Heart left ventricle (tissue), 16 donors: ENCODE measurements at regions of chr17 and their contacts with region 1.

Region 1: DNA sequence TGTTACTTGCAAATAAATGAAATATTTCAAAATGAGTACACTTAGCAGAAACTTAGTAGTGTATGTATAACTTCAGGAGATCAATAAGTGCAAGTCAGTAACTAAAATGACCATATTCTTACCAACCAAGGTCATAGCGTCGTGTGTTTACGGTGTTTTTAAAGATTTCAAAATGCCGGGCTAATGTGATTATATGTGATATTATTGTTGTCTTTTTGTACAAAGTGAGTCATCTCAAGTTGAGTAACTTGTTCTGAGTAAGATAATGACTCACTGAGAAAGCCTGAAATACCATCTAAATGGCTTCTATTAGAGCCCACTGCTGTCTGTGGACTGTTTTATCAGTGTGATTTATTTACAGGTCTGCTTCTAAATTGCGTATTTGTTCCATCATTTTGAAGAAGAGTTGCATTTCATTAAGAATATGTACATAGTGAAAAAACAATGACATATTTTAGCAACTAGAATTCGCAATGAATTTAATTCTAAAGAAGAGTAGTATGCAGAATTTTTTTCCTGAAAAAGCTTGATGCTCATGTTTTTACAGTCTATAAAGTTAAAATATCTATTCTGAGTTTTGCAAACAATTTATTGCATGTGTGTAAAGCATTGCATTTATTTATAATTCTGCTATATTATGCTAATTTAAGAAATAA is 12.7 kb downstream of the KRT12 start:
- DNase-seq: no peak
- ATAC-seq: no peak
- H3K4me3 ChIP-seq: no peak overlapping the region
- H3K27ac ChIP-seq: no peak overlapping the region
- H3K4me1 ChIP-seq: peaks cover 0 to 11% (median 2%) of the 10 kb centered on the region in 12 donors
- H3K27me3 ChIP-seq: peaks cover 0 to 10% (median 0%) of the 10 kb centered on the region in 9 donors
- CTCF ChIP-seq: no peak
- POLR2A ChIP-seq: no peak

Region 2: DNA sequence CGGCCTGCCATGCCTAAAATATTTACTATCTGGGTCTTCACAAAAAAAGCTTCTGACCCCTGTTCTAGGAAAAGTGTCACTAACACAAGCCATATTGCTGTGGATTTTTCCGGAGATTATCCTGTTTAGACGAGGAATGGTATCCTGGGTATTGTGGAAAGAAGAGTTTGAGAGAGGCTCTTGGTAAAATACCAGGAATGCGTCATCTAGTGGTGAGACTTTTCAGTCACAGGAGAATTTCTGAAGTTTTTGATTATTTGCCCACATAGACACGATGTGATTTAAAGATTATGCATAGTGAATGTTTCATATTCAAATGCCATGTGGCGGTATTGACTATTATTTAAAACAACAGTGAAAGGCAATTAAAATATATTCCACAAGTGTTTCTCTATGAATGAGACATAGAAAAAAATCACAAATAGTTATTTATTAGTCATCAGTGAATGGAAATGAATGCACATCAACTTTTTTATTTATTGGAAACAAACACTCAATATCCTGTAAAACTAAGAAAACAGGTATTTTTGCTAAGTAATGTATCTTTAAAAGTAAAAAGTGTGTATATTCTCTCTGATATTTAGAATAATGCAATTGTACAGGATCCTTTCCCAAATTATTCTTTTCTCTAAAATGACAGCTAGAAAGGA is 62.4 kb before region 1 on chr17:
- intact Hi-C with region 1: no loop called
- DNase-seq: no peak
- ATAC-seq: no peak
- H3K4me3 ChIP-seq: no peak overlapping the region
- H3K27ac ChIP-seq: no peak overlapping the region
- H3K4me1 ChIP-seq: peaks cover 0 to 10% (median 0%) of the 10 kb centered on the region in 12 donors
- H3K27me3 ChIP-seq: peaks cover 0 to 14% (median 0%) of the 10 kb centered on the region in 9 donors
- CTCF ChIP-seq: peak; percentile 26 to 67 (median 52)
- POLR2A ChIP-seq: no peak

Region 3: GRCh38 chr17:40803617-40804082 is 50.6 kb before region 1 on chr17:
- intact Hi-C with region 1: loop called in 3 of 10 experiments (anchors 1 to 10 kb)
- DNase-seq: peak; percentile 65 to 78 (median 70)
- ATAC-seq: peak; percentile 61 to 90 (median 86)
- H3K4me3 ChIP-seq: no peak overlapping the region
- H3K27ac ChIP-seq: no peak overlapping the region
- H3K4me1 ChIP-seq: peaks cover 0 to 6% (median 1%) of the 10 kb centered on the region in 12 donors
- H3K27me3 ChIP-seq: peaks cover 0 to 37% (median 8%) of the 10 kb centered on the region in 9 donors
- CTCF ChIP-seq: peak; percentile 72 to 92 (median 83)
- POLR2A ChIP-seq: no peak

Region 4: GRCh38 chr17:40809721-40810421 is 44.4 kb before region 1 on chr17:
- intact Hi-C with region 1: loop called in 2 of 10 experiments (anchors 2 to 10 kb)
- DNase-seq: no peak
- ATAC-seq: peak; percentile 36 to 84 (median 76)
- H3K4me3 ChIP-seq: no peak overlapping the region
- H3K27ac ChIP-seq: peak overlapping the region in 9 of 12 donors; percentile 4 to 56 (median 25)
- H3K4me1 ChIP-seq: peaks cover 0 to 25% (median 16%) of the 10 kb centered on the region in 12 donors
- H3K27me3 ChIP-seq: peaks cover 0 to 43% (median 0%) of the 10 kb centered on the region in 9 donors
- CTCF ChIP-seq: no peak
- POLR2A ChIP-seq: no peak